Activated naive CD4-positive, alpha-beta T cell treated with anti-CD3 and anti-CD28 coated beads for 36 hours (primary cell): ENCODE measurements at regions of chr11 and their contacts with region 1.

Region 1: GRCh38 chr11:6362873-6363678 is 27.2 kb upstream of the SMPD1 start:
- DNase-seq: peak; percentile 86
- H3K4me3 Mint-ChIP-seq: no peak overlapping the region
- H3K27ac Mint-ChIP-seq: no peak overlapping the region
- H3K4me1 Mint-ChIP-seq: no peaks in the 10 kb centered on the region
- H3K27me3 Mint-ChIP-seq: no peaks in the 10 kb centered on the region

Region 2: DNA sequence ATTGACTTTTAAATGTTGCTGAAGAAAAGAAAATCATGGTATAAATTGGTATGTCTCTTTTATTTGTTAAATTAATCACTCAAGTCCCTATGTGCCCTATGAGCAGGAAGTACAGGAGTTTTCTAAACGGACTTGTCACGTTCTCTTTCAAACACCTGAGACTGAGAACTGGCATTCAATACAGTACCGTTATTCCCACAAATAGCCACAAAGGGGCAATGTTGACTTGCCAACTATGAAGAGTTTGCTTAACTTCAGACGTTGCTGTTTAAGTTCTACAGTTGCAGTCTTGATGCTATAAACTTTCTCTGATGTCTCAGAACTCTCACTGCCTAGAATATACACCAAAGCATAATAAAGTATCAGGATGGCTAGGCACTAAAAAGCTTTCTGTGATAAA is 340.1 kb before region 1 on chr11:
- CTCF ChIA-PET with region 1: interaction called, 10 read pairs
- intact Hi-C with region 1: no loop called
- DNase-seq: peak; percentile 28
- H3K4me3 Mint-ChIP-seq: no peak overlapping the region
- H3K27ac Mint-ChIP-seq: no peak overlapping the region
- H3K4me1 Mint-ChIP-seq: no peaks in the 10 kb centered on the region
- H3K27me3 Mint-ChIP-seq: peaks cover 20% of the 10 kb centered on the region

Region 3: GRCh38 chr11:6258571-6259081 is 104.5 kb before region 1 on chr11:
- CTCF ChIA-PET with region 1: interaction called, 66 read pairs
- intact Hi-C with region 1: no loop called
- DNase-seq: peak; percentile 13
- H3K4me3 Mint-ChIP-seq: no peak overlapping the region
- H3K27ac Mint-ChIP-seq: no peak overlapping the region
- H3K4me1 Mint-ChIP-seq: no peaks in the 10 kb centered on the region
- H3K27me3 Mint-ChIP-seq: peaks cover 7% of the 10 kb centered on the region

Region 4: GRCh38 chr11:6305297-6305696 is 57.8 kb before region 1 on chr11:
- CTCF ChIA-PET with region 1: interaction called, 25 read pairs
- intact Hi-C with region 1: no loop called
- DNase-seq: no peak
- H3K4me3 Mint-ChIP-seq: no peak overlapping the region
- H3K27ac Mint-ChIP-seq: no peak overlapping the region
- H3K4me1 Mint-ChIP-seq: no peaks in the 10 kb centered on the region
- H3K27me3 Mint-ChIP-seq: peaks cover 29% of the 10 kb centered on the region

Region 5: DNA sequence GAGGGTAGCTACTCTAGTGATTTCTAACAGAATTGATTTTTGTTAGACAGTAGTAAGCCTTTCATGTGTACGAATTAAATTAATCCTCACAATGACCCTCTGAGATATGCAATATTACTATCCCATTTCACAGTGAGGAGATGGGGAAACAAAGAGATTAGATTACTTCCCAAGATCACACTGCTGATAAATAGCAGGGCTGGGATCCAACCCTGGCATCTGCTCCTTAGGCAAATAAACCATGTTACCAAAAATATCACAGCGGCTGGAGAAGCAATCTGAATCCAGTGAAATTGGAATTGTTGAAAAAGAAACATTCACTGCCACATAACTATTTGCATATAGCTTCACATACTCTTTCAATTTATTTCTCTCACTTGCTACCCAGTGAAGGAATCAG is 30.0 kb before region 1 on chr11:
- CTCF ChIA-PET with region 1: interaction called, 19 read pairs
- intact Hi-C with region 1: no loop called
- DNase-seq: no peak
- H3K4me3 Mint-ChIP-seq: no peak overlapping the region
- H3K27ac Mint-ChIP-seq: peak overlapping the region; percentile 51
- H3K4me1 Mint-ChIP-seq: no peaks in the 10 kb centered on the region
- H3K27me3 Mint-ChIP-seq: peaks cover 2% of the 10 kb centered on the region